Aorta (tissue), 5 donors: ENCODE measurements at regions of chr4 and their contacts with region 1.

Region 1: DNA sequence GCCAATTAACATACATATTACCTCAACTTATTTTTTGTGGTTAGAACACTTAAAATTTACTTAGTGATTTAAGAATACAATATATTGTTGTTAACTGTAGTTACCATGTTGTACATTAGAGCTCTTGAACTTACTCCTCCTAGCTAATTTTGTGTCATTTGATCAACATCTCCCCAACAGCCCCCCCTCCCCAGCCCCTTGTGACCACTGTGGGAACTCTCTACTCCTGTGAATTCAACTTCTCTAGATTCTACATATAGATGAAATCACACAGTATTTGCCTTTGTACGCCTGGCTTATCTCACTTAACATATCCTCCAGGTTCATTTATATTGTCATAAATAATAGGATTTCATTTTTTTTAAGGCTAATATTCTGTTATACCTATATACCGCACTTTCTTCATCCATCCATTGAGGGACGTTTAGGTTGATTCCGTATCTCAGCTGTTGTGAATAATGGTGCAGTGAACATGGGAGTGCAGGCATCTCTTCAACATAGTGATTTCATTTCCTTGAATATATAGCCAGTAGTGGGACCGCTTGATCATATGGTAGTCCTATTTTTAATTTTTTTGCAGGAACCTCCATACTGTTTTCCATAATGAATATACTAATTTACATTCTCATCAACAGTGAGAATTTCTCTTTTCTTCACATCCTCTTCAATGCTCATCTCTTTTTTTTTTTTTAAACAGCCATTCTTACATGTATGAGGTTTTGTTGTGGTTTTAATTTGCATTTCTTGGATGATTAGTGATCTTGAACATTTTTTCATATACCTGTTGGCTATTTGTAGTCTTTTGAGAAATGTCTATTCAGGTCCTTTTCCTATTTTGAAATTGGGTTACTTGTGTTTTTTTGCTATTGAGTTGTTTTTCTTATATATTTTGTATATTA is 66.8 kb downstream of the RAPGEF2 start:
- DNase-seq: no peak
- ATAC-seq: no peak
- H3K4me3 ChIP-seq: no peak overlapping the region
- H3K27ac ChIP-seq: no peak overlapping the region
- H3K4me1 ChIP-seq: peaks cover 0 to 2% of the 10 kb centered on the region in 2 donors
- H3K27me3 ChIP-seq: no peaks in the 10 kb centered on the region

Region 2: GRCh38 chr4:159102622-159103383 is 66.8 kb before region 1 on chr4 and contains the start of gene RAPGEF2:
- intact Hi-C with region 1: loop called (anchors 5 to 10 kb)
- DNase-seq: peak; percentile 96
- ATAC-seq: peak; percentile 95
- H3K4me3 ChIP-seq: peak within 1 kb of the TSS; percentile 99 to 100
- H3K27ac ChIP-seq: peak within 1 kb of the TSS; percentile 85 to 99
- H3K4me1 ChIP-seq: peaks cover 0 to 4% of the 10 kb centered on the region in 2 donors
- H3K27me3 ChIP-seq: no peaks in the 10 kb centered on the region
- total RNA-seq, gene RAPGEF2: 47.6 to 51.3 TPM